ENCODE measurements at regions of chr10 and their contacts with region 1.

Region 1: DNA sequence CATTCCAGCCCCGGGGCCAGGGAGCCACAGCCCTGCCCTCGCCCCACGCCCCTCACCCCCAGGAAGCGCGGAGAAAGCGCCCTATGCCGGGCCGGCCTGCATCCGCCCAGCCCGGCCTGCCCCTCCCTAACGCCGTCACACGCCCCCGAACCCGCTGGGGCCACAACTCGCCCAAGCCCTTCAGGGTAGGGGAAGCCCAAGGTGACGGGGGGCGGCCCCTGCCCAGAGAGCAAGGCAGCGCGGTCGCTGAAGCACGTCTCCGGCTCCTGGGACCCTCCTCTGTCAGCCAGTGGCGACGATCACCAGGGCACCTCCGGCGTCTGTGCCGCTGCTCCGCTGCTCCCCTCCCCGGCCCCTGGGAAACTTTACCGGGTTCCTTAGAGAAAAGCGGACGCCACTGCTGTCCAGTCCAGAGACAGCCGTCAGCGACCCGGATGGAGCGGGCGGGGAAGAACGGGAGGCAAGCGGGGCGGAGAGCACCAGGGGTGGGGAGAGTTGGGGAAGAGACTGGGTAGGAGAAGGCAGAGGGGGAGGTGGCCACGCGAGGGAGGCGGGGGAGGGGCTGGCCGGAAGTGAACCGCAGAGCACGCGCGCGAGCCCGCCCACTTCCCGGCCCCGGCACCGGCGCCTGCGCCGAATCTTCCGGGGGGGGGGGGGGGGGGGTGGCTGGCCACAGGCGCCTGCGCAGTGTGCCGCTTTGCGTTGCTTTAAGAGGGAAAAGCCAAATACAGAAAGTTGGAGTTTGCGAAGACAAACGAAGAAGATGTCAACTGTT is at the start of gene HERC4:
- DNase-seq: peak; percentile 83 to 93 (median 90)
- H3K4me3 ChIP-seq: peak within 1 kb of the TSS; percentile 56 to 99 (median 95)
- H3K27ac ChIP-seq: peak within 1 kb of the TSS; percentile 83 to 100 (median 97)
- H3K27me3 ChIP-seq: no peaks in the 10 kb centered on the region
- CTCF ChIP-seq: peak in 6 of 56 donors; percentile 11 to 42 (median 18)
- total RNA-seq, gene HERC4: 64.1 to 139 (median 86.7) TPM

Region 2: GRCh38 chr10:67657775-67658174 is 417.2 kb before region 1 on chr10:
- intact Hi-C with region 1: no loop called
- DNase-seq: peak in 7 of 10 donors; percentile 24 to 64 (median 50)
- H3K4me3 ChIP-seq: peak overlapping the region in 5 of 59 donors; percentile 1 to 38 (median 17)
- H3K27ac ChIP-seq: peak overlapping the region in 11 of 59 donors; percentile 4 to 63 (median 42)
- H3K27me3 ChIP-seq: no peaks in the 10 kb centered on the region
- CTCF ChIP-seq: peak in 41 of 56 donors; percentile 10 to 60 (median 33)

Region 3: GRCh38 chr10:67849331-67850011 is 225.5 kb before region 1 on chr10:
- intact Hi-C with region 1: loop called (anchors 10 kb)
- DNase-seq: peak; percentile 93 to 98 (median 96)
- H3K4me3 ChIP-seq: peak overlapping the region; percentile 58 to 98 (median 83)
- H3K27ac ChIP-seq: peak overlapping the region; percentile 61 to 99 (median 94)
- H3K27me3 ChIP-seq: no peaks in the 10 kb centered on the region
- CTCF ChIP-seq: peak in 28 of 56 donors; percentile 3 to 44 (median 22)

Region 4: DNA sequence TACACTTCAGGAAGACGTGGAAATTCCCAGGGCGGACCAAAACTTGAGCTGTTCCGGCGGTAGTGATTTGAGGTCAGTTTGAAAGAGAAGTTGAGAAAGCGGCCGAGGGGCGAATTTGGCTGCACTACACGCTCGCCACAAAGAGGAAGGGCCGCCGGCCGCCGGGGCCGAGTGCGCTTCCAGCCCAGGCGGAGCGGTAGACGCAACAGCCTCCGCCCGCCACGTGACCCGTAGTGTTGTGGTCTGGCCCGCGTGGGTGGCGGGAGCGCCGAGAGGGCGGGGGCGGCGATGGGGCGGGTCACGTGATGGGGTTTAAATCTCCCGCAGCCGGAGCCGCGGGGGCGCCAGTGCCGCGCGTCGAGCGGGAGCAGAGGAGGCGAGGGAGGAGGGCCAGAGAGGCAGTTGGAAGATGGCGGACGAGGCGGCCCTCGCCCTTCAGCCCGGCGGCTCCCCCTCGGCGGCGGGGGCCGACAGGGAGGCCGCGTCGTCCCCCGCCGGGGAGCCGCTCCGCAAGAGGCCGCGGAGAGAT is 190.6 kb before region 1 on chr10 and contains the start of gene SIRT1:
- intact Hi-C with region 1: loop called (anchors 1 to 2 kb)
- DNase-seq: peak; percentile 94 to 98 (median 96)
- H3K4me3 ChIP-seq: peak within 1 kb of the TSS; percentile 63 to 94 (median 85)
- H3K27ac ChIP-seq: peak within 1 kb of the TSS; percentile 11 to 98 (median 95)
- H3K27me3 ChIP-seq: no peaks in the 10 kb centered on the region
- CTCF ChIP-seq: peak in 38 of 56 donors; percentile 6 to 68 (median 32)
- total RNA-seq, gene SIRT1: 14.8 to 41.9 (median 25.2) TPM

Region 5: GRCh38 chr10:68156373-68157185 is 81.6 kb after region 1 on chr10:
- intact Hi-C with region 1: loop called (anchors 5 to 10 kb)
- DNase-seq: peak in 4 of 10 donors; percentile 20 to 72 (median 50)
- H3K4me3 ChIP-seq: no peak overlapping the region
- H3K27ac ChIP-seq: peak overlapping the region in 1 of 59 donors; percentile 9
- H3K27me3 ChIP-seq: no peaks in the 10 kb centered on the region
- CTCF ChIP-seq: peak; percentile 52 to 95 (median 84)

Region 6: DNA sequence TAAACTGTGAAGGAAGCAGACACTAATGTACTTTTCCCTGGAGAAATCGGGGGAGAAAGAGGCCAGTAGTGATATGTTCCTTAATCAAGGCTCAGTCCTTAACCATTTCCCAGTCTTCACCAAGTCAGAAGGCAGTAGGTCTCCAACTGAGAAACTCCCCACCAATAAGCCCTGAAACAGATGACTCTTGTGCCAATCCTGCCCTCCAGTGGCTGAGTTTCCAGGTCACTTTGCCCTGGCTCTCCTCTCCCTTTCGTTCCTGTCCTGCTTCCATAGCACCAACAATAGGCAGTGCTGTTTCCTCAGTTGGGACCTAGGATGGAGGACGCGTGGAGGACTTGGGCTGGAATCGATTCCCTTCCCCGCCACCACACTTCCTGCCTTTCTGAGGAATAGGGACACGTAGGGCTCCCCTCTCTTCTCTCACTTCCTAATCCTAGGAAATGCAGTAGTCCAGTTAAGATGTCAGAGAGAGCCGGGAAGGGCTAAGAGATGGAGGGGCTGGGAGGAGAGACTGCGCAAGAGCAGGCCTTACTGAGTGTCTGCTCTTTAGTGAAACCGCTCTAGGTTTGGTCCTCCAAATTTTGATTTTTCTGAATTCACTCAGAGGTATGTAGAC is 133.6 kb after region 1 on chr10:
- intact Hi-C with region 1: loop called (anchors 5 to 10 kb)
- DNase-seq: peak in 9 of 10 donors; percentile 29 to 73 (median 58)
- H3K4me3 ChIP-seq: no peak overlapping the region
- H3K27ac ChIP-seq: no peak overlapping the region
- H3K27me3 ChIP-seq: no peaks in the 10 kb centered on the region
- CTCF ChIP-seq: peak in 53 of 56 donors; percentile 30 to 74 (median 57)

Region 7: GRCh38 chr10:68231106-68231816 is 156.3 kb after region 1 on chr10:
- intact Hi-C with region 1: loop called in 1 of 2 experiments (anchors 10 kb)
- DNase-seq: peak; percentile 58 to 86 (median 70)
- H3K4me3 ChIP-seq: peak overlapping the region; percentile 54 to 91 (median 77)
- H3K27ac ChIP-seq: peak overlapping the region; percentile 50 to 94 (median 87)
- H3K27me3 ChIP-seq: no peaks in the 10 kb centered on the region
- CTCF ChIP-seq: peak in 40 of 56 donors; percentile 12 to 61 (median 36)

Region 8: GRCh38 chr10:68331455-68332258 is 256.7 kb after region 1 on chr10 and contains the start of gene HNRNPH3:
- intact Hi-C with region 1: loop called (anchors 2 to 10 kb)
- DNase-seq: peak; percentile 93 to 98 (median 96)
- H3K4me3 ChIP-seq: peak within 1 kb of the TSS; percentile 64 to 99 (median 90)
- H3K27ac ChIP-seq: peak within 1 kb of the TSS; percentile 91 to 100 (median 99)
- H3K27me3 ChIP-seq: no peaks in the 10 kb centered on the region
- CTCF ChIP-seq: peak in 10 of 56 donors; percentile 2 to 28 (median 10)
- total RNA-seq, gene HNRNPH3: 77.7 to 201 (median 131) TPM

Measured in dorsolateral prefrontal cortex (tissue), 120 donors.